GM12878 (cell line): ENCODE measurements at regions of chr5 and their contacts with region 1.

Region 1: GRCh38 chr5:126354012-126354857 is 69.0 kb upstream of the GRAMD2B start:
- DNase-seq: peak; percentile 38
- ATAC-seq: peak; percentile 43
- H3K4me3 ChIP-seq: no peak overlapping the region
- H3K27ac ChIP-seq: no peak overlapping the region
- H3K4me1 ChIP-seq: peaks cover 4% of the 10 kb centered on the region; the same call in 1 of the 2 replicates
- H3K27me3 ChIP-seq: no peaks in the 10 kb centered on the region
- CTCF ChIP-seq: peak; percentile 39 to 74 (median 58); a peak in 5 of 6 replicates
- EP300 ChIP-seq: no peak
- POLR2A ChIP-seq: no peak
- RAD21 ChIP-seq: peak; percentile 91

Region 2: GRCh38 chr5:126339215-126339805 is 14.9 kb before region 1 on chr5:
- CTCF ChIA-PET with region 1: interaction called, 50 read pairs
- POLR2A ChIA-PET with region 1: no interaction called
- RAD21 ChIA-PET with region 1: interaction called, 11 read pairs
- SMC1A ChIA-PET with region 1: interaction called, 26 read pairs
- in situ Hi-C with region 1: no loop called
- intact Hi-C with region 1: no loop called
- DNase-seq: no peak
- ATAC-seq: peak; percentile 62
- H3K4me3 ChIP-seq: no peak overlapping the region
- H3K27ac ChIP-seq: no peak overlapping the region
- H3K4me1 ChIP-seq: no peaks in the 10 kb centered on the region
- H3K27me3 ChIP-seq: no peaks in the 10 kb centered on the region
- CTCF ChIP-seq: peak; percentile 60 to 80 (median 74); a peak in 5 of 6 replicates
- EP300 ChIP-seq: no peak
- POLR2A ChIP-seq: no peak
- RAD21 ChIP-seq: peak; percentile 89

Region 3: DNA sequence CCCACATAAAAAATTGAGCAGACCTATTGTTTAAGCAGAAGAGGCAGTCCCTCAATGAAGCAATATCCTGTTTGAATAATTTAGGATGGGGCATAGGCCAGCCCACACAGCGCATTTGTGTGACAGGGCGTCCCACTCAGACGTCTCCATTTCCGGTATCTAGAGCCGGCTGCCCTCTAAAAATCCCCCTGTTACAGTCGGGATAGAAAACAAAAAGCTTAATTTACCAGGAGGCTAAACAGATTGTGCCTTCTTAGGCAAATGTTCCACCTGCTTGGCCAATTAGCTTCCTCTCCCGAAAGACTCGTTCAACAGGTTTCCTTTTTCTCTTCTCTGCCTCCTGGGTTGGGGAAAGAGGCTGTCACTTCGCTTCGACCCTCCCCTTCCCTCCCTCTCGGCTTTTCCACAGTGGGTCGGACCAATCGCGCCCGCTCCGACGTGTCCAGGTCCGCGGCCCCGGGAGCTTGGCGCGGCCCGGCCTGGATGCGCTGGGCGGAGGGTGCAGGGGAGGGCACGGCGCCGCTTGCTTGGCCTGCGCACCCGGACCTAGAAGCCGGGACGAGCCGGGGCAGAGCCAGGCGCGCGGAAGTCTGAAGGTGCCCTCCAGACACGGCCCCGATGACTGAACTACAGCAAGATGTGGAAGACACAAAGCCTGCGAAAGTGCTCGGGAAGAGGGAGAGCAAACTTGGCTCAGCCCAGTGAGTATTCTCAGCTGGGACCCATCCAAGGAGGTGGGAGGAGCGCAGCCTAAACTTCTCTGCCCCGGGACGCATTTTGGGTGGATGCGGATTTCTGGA is 69.0 kb after region 1 on chr5 and contains the start of gene GRAMD2B:
- CTCF ChIA-PET with region 1: no interaction called
- POLR2A ChIA-PET with region 1: no interaction called
- RAD21 ChIA-PET with region 1: no interaction called
- SMC1A ChIA-PET with region 1: interaction called, 10 read pairs
- in situ Hi-C with region 1: no loop called
- intact Hi-C with region 1: loop called (anchors 5 kb)
- DNase-seq: peak; percentile 54
- ATAC-seq: peak; percentile 89
- H3K4me3 ChIP-seq: peak within 1 kb of the TSS; percentile 78
- H3K27ac ChIP-seq: peak within 1 kb of the TSS; percentile 78
- H3K4me1 ChIP-seq: no peaks in the 10 kb centered on the region; the same call in 1 of the 2 replicates
- H3K27me3 ChIP-seq: no peaks in the 10 kb centered on the region
- CTCF ChIP-seq: no peak
- EP300 ChIP-seq: no peak
- POLR2A ChIP-seq: peak; percentile 76
- RAD21 ChIP-seq: no peak
- polyA plus RNA-seq, gene GRAMD2B: 1.9 to 2.7 TPM

Region 4: DNA sequence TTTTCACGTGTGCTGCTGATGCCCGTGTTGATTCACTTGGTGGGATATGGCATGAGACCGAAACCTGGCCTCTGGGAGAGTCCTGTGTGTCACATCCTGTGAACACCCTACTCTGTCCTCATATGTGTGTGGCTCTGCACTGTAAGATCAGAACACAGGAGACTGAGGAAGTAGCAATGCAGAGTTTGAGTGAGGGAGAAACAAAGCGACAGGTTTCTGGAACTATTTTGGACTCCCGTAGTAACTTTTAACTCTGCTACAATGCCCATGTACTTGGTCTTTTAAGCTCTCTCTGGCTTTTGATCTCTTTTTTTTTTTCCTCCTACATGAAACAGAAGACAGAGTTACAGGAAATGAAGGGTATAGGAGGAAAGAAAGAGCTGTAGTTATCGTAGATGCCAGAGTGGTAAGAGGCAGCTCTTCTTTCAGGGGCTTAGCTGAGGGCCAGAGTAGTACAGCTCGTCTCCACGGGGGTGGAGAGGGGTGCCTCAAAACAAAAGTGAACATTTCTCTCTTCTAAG is 95.6 kb after region 1 on chr5:
- CTCF ChIA-PET with region 1: interaction called, 4 read pairs
- POLR2A ChIA-PET with region 1: no interaction called
- RAD21 ChIA-PET with region 1: interaction called, 12 read pairs
- SMC1A ChIA-PET with region 1: interaction called, 8 read pairs
- in situ Hi-C with region 1: no loop called
- intact Hi-C with region 1: no loop called
- DNase-seq: peak; percentile 79
- ATAC-seq: peak; percentile 86
- H3K4me3 ChIP-seq: peak overlapping the region; percentile 51; the same call in 1 of the 2 replicates
- H3K27ac ChIP-seq: peak overlapping the region; percentile 94
- H3K4me1 ChIP-seq: peaks cover 36% of the 10 kb centered on the region
- H3K27me3 ChIP-seq: no peaks in the 10 kb centered on the region
- CTCF ChIP-seq: no peak
- EP300 ChIP-seq: peak; percentile 38; a peak in 2 of 4 replicates
- POLR2A ChIP-seq: peak; percentile 64
- RAD21 ChIP-seq: peak; percentile 14; the same call in 1 of the 2 replicates

Region 5: GRCh38 chr5:126490167-126490940 is 136.1 kb after region 1 on chr5:
- CTCF ChIA-PET with region 1: interaction called, 18 read pairs
- POLR2A ChIA-PET with region 1: interaction called, 3 read pairs
- RAD21 ChIA-PET with region 1: interaction called, 13 read pairs
- SMC1A ChIA-PET with region 1: interaction called, 9 read pairs
- in situ Hi-C with region 1: no loop called
- intact Hi-C with region 1: loop called (anchors 2 kb)
- DNase-seq: no peak
- ATAC-seq: no peak
- H3K4me3 ChIP-seq: no peak overlapping the region
- H3K27ac ChIP-seq: no peak overlapping the region
- H3K4me1 ChIP-seq: no peaks in the 10 kb centered on the region
- H3K27me3 ChIP-seq: no peaks in the 10 kb centered on the region
- CTCF ChIP-seq: no peak
- EP300 ChIP-seq: no peak
- POLR2A ChIP-seq: no peak
- RAD21 ChIP-seq: no peak

Region 6: DNA sequence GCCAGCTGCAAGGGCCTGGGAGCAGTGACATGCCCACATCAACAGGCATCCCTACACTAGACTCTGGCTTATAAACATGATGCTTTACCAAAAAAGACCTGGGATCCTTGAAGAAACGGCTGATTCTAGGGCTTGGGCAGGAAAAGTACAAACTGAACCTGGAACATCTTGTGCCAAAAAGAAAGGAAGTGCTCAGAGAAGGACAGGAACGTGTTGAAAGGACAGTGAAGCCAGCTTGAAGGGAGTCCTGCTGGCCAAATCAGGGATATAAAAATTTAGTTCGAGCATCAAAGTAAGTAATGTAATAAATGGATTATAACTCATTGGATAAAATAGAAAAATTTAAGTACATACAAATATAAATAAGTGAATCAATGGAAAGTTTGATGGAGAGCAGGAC is 182.6 kb after region 1 on chr5:
- CTCF ChIA-PET with region 1: interaction called, 136 read pairs
- POLR2A ChIA-PET with region 1: no interaction called
- RAD21 ChIA-PET with region 1: interaction called, 14 read pairs
- SMC1A ChIA-PET with region 1: interaction called, 18 read pairs
- in situ Hi-C with region 1: loop called (anchors 5 kb)
- intact Hi-C with region 1: loop called (anchors 1 kb)
- DNase-seq: no peak
- ATAC-seq: no peak
- H3K4me3 ChIP-seq: no peak overlapping the region
- H3K27ac ChIP-seq: no peak overlapping the region
- H3K4me1 ChIP-seq: no peaks in the 10 kb centered on the region
- H3K27me3 ChIP-seq: no peaks in the 10 kb centered on the region
- CTCF ChIP-seq: no peak
- EP300 ChIP-seq: no peak
- POLR2A ChIP-seq: no peak
- RAD21 ChIP-seq: no peak

Region 7: GRCh38 chr5:126600631-126601511 is 246.6 kb after region 1 on chr5 and contains the start of gene PHAX:
- CTCF ChIA-PET with region 1: interaction called, 4 read pairs
- POLR2A ChIA-PET with region 1: no interaction called
- RAD21 ChIA-PET with region 1: interaction called, 3 read pairs
- SMC1A ChIA-PET with region 1: no interaction called
- in situ Hi-C with region 1: no loop called
- intact Hi-C with region 1: loop called (anchors 5 kb)
- DNase-seq: peak; percentile 32
- ATAC-seq: peak; percentile 95
- H3K4me3 ChIP-seq: peak within 1 kb of the TSS; percentile 92
- H3K27ac ChIP-seq: peak within 1 kb of the TSS; percentile 69
- H3K4me1 ChIP-seq: no peaks in the 10 kb centered on the region; the same call in 1 of the 2 replicates
- H3K27me3 ChIP-seq: no peaks in the 10 kb centered on the region
- CTCF ChIP-seq: peak; percentile 72 to 89 (median 85)
- EP300 ChIP-seq: no peak
- POLR2A ChIP-seq: peak; percentile 94
- RAD21 ChIP-seq: 0 out of 2 replicates have a peak, but pooled peaks have one; percentile 10
- polyA plus RNA-seq, gene PHAX: 60.8 to 71.5 TPM